WTC11 (cell line): ENCODE measurements at regions of chr5 and their contacts with region 1.

Region 1: DNA sequence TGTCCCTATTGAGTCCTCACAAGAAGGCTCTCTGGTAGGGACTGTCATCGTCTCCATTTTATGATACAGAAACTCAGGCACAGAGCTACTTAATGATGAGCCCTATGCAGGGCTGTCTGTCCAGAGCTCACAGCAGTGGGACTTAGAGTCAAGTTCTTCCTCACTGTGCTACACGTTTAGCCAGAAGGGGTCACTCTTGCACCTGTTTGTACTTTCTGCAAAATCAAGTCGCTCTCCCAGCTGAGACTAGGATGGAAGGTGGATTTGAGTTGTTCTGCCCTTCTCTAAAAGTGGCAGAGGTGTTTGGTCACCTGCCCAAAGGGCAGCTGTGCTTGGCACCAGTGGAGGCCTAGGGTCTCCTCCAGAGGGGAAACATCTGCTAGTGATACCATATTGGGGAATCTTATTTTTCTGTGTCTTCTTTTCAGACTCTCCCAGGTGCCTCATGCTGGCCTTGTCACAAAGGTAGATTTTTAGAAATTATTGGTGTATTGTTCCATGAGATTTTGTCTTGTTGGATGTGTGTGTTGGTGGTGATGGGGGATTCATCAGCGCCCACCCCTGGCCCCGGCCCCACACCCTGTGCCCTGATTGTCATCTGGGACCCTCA is 104.2 kb downstream of the PPARGC1B start:
- DNase-seq: peak; percentile 71
- ATAC-seq: peak; percentile 70
- H3K4me3 Mint-ChIP-seq: no peak overlapping the region
- H3K27ac Mint-ChIP-seq: no peak overlapping the region
- H3K4me1 Mint-ChIP-seq: no peaks in the 10 kb centered on the region
- H3K27me3 Mint-ChIP-seq: no peaks in the 10 kb centered on the region
- CTCF ChIP-seq: peak; percentile 35

Region 2: GRCh38 chr5:149455889-149456409 is 378.4 kb before region 1 on chr5:
- CTCF ChIA-PET with region 1: no interaction called
- POLR2A ChIA-PET with region 1: no interaction called
- DNase-seq: no peak
- ATAC-seq: no peak
- H3K4me3 Mint-ChIP-seq: no peak overlapping the region
- H3K27ac Mint-ChIP-seq: no peak overlapping the region
- H3K4me1 Mint-ChIP-seq: peaks cover 16% of the 10 kb centered on the region
- H3K27me3 Mint-ChIP-seq: no peaks in the 10 kb centered on the region
- CTCF ChIP-seq: no peak

Region 3: DNA sequence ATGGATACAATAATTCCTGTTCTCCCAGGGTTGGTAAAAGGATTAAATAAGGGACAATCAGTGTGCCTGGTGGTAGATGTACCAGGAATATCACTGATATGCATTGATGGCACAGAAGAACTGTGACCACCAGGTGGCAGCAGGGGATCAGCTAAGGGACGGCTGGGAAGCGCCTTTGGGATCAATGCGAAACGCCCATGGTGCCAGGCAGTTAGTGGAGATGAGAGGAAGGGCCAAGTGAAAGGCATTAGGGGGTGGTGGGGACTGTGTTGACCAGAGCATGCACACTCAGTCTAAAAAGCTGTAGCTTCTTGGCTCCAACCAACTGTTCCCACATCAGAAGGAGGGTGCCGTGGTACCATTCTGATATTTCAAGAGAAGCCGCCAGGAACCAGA is 197.5 kb before region 1 on chr5:
- CTCF ChIA-PET with region 1: interaction called, 29 read pairs
- POLR2A ChIA-PET with region 1: no interaction called
- DNase-seq: peak; percentile 50
- ATAC-seq: peak; percentile 78
- H3K4me3 Mint-ChIP-seq: no peak overlapping the region
- H3K27ac Mint-ChIP-seq: no peak overlapping the region
- H3K4me1 Mint-ChIP-seq: peaks cover 24% of the 10 kb centered on the region
- H3K27me3 Mint-ChIP-seq: no peaks in the 10 kb centered on the region
- CTCF ChIP-seq: peak; percentile 59; the same call in 1 of the 2 replicates

Region 4: GRCh38 chr5:149799119-149799623 is 35.2 kb before region 1 on chr5:
- CTCF ChIA-PET with region 1: interaction called, 10 read pairs
- POLR2A ChIA-PET with region 1: no interaction called
- DNase-seq: no peak
- ATAC-seq: no peak
- H3K4me3 Mint-ChIP-seq: no peak overlapping the region
- H3K27ac Mint-ChIP-seq: no peak overlapping the region
- H3K4me1 Mint-ChIP-seq: peaks cover 51% of the 10 kb centered on the region
- H3K27me3 Mint-ChIP-seq: no peaks in the 10 kb centered on the region
- CTCF ChIP-seq: no peak

Region 5: GRCh38 chr5:149860801-149861322 is 26.5 kb after region 1 on chr5:
- CTCF ChIA-PET with region 1: interaction called, 298 read pairs
- POLR2A ChIA-PET with region 1: no interaction called
- DNase-seq: peak; percentile 26
- ATAC-seq: peak; percentile 71
- H3K4me3 Mint-ChIP-seq: no peak overlapping the region
- H3K27ac Mint-ChIP-seq: peak overlapping the region; percentile 35
- H3K4me1 Mint-ChIP-seq: peaks cover 12% of the 10 kb centered on the region
- H3K27me3 Mint-ChIP-seq: no peaks in the 10 kb centered on the region
- CTCF ChIP-seq: no peak

Region 6: DNA sequence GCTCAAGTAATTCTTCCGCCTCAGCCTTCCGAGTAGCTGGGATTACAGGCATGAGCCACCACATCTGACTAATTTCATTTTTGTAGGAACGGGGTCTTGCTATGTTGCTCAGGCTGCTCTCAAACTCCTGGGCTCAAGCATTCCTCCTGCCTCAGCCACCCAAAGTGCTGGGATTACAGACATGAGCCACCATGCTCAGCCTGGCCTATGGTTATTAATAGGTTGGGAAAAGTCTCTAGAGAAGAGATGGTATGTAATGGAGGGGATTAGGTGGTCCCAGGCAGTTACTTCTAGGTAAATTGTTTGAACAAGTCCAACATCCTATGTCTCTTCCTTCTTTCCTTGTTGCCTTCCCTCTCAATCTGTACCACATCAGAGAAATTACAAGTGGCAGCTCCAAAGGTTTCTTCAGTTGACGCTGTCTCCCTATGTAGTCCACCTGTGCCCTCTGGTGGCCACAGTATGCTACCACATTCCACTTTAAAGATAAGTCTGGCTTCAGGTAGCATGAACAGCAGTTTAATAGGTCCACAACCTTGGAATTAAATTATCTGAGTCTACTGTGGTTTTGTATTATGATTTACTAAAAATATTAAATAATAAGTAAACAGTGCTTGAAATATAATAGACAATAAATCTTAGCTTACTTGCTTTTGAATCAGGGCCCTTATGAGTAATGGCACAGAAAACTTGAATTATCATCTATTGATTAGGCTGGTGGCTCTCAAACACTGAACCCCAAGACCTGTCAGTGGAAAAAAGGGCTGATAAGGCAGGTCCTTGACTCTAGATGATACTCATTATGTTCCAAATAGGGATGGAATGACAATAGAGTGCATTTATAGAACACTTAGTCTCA is 156.4 kb after region 1 on chr5:
- CTCF ChIA-PET with region 1: interaction called, 76 read pairs
- POLR2A ChIA-PET with region 1: no interaction called
- DNase-seq: peak; percentile 74
- ATAC-seq: peak; percentile 94
- H3K4me3 Mint-ChIP-seq: no peak overlapping the region
- H3K27ac Mint-ChIP-seq: no peak overlapping the region
- H3K4me1 Mint-ChIP-seq: no peaks in the 10 kb centered on the region
- H3K27me3 Mint-ChIP-seq: no peaks in the 10 kb centered on the region
- CTCF ChIP-seq: peak; percentile 88